Activated B cell treated with CpG ODN at 0.5 μM for 24 hours (primary cell): ENCODE measurements at regions of chr22 and their contacts with region 1.

Region 1: DNA sequence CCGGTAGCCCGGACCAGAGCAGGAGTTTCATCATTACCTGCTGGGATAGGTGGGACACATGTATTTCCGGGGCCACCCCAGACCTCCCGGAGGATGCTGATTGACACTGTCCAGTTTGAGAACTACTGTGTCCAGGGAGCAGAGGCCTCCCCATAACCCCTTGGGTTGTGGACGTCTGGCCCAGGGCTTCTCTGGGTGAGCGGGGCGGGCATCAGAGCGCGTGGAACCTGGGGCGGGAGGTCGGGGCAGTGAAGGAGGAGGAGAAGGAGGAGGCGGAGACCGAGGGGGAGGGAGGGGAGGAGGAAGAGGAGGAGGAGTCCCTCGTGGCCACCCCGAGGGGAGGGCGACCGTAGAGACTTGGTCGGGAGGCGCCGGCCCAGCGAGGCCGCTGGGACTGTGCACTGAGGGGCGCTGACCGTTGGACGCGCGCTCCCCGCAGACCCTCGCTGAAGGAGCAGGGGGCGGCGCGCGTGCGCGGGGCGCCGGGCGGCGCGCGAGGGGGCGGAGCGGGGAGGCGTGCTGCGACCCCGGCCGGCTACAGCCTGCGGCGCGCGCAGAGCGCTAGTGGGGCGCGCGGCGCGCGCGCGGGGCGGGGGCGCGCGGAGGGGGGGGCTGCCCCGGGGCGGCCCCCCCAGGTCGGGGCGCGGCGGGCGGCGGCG is at the start of gene GRK3:
- DNase-seq: peak; percentile 74
- ATAC-seq: peak; percentile 64
- H3K4me3 Mint-ChIP-seq: peak within 1 kb of the TSS; percentile 98
- H3K27ac Mint-ChIP-seq: peak within 1 kb of the TSS; percentile 99
- H3K4me1 Mint-ChIP-seq: peaks cover 81% of the 10 kb centered on the region
- H3K27me3 Mint-ChIP-seq: no peaks in the 10 kb centered on the region
- CTCF ChIP-seq: no peak
- total RNA-seq, gene GRK3: 66.6 and 66.7 TPM in 2 replicates

Region 2: DNA sequence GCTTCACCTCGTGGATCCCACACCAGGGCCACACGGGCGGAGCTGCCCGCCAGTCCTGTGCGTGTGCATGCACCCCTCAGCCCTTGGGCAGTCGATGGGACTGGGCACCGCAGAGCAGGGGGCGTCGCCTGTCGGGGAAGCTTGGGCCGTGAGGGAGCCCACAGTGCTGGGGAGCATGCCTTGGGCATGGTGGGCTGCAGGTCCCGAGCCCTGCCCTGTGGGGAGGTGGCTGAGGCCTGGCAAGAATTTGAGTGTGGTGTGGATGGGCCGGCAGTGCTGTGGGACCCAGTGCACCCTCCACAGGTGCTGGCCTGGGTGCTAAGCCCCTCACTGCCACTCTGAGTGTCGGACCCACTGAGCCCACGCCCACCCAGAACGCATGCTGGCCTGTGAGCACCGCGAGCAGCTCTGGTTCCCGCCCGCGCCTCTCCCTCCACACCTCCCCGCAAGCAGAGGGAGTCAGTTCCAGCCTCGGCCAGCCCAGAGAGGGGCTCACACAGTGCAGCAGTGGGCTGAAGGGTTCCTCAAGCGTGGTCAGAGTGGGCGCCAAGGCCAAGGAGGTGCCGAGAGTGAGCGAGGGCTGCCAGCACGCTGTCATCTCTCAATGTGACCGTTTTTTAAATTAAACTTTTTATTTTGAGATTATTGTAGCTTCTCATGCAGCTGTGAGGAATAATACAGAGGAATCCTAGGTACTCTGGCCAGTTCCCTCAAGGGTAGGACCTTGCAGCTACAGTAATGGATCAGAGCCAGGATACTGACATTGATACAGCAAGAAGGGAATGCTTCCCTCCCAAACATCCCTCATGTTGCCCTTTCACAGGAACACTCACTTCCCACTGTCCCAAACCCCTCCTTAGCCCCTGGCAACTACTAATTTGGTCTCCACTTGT is 217.3 kb before region 1 on chr22:
- CTCF ChIA-PET with region 1: no interaction called
- POLR2A ChIA-PET with region 1: no interaction called
- intact Hi-C with region 1: no loop called
- DNase-seq: no peak
- ATAC-seq: no peak
- H3K4me3 Mint-ChIP-seq: no peak overlapping the region
- H3K27ac Mint-ChIP-seq: no peak overlapping the region
- H3K4me1 Mint-ChIP-seq: no peaks in the 10 kb centered on the region
- H3K27me3 Mint-ChIP-seq: no peaks in the 10 kb centered on the region
- CTCF ChIP-seq: no peak

Region 3: DNA sequence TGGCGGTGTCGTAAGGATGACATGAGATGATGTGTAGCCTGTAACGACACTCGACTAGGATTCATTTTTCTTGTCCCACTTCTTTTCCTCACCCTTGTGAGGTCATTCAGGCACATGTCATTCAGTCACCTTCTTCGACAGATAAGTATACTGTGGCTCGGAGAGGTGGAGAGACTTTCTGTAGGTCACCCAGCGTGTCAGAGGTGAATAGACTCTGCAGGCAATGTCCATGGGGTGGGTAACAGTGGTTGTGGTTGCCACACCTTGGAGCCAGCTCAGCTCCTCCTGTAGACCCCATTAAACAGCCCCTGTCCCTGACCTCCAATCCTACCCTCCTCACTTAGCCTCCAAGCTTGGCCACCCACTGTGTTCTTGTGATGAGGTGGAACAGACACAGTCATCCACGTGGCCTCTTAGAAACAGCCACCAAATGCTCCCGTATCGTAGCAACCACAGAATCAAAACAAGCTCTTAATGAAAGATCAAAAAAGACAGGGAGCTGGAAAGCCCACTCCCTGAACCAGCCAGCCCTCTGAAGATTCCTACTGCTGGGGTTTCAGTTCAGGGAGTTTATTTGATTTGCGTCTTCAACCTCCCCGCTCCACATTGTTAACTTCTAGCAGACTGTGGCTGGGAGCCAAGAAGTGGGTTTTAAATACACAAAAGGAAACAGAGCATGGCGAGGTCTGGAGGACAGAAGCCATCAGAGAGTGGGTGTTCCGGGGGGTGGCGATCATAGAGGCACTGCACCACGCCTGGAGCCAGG is 89.0 kb before region 1 on chr22:
- CTCF ChIA-PET with region 1: no interaction called
- POLR2A ChIA-PET with region 1: no interaction called
- intact Hi-C with region 1: no loop called
- DNase-seq: no peak
- ATAC-seq: no peak
- H3K4me3 Mint-ChIP-seq: no peak overlapping the region
- H3K27ac Mint-ChIP-seq: no peak overlapping the region
- H3K4me1 Mint-ChIP-seq: no peaks in the 10 kb centered on the region
- H3K27me3 Mint-ChIP-seq: no peaks in the 10 kb centered on the region
- CTCF ChIP-seq: no peak

Region 4: GRCh38 chr22:25540166-25540907 is 24.1 kb before region 1 on chr22:
- CTCF ChIA-PET with region 1: interaction called, 68 read pairs
- POLR2A ChIA-PET with region 1: interaction called, 53 read pairs
- intact Hi-C with region 1: loop called (anchors 1 kb)
- DNase-seq: no peak
- ATAC-seq: no peak
- H3K4me3 Mint-ChIP-seq: no peak overlapping the region
- H3K27ac Mint-ChIP-seq: no peak overlapping the region
- H3K4me1 Mint-ChIP-seq: peaks cover 15% of the 10 kb centered on the region
- H3K27me3 Mint-ChIP-seq: no peaks in the 10 kb centered on the region
- CTCF ChIP-seq: no peak

Region 5: DNA sequence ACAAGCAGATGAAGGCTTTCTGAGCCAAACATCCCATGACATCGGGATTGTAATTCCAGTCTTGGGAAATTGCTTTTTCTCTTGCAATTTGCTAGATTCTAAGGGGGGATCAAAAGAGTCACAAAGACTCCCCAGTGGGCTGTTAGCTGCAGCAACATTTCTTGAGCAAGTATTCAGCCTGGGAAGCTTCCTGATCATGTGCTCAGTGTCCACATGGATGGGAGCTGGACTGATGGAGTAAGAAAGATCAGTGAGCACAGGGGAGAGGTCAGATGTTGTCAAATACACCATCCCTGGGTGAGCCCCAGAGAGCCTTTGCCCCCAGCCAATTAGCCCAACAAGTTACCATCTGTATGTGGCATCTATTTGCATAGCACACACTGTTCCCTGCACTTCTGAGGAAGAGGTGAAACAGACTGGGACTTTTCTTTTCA is 10.2 kb before region 1 on chr22:
- CTCF ChIA-PET with region 1: interaction called, 3 read pairs
- POLR2A ChIA-PET with region 1: interaction called, 33 read pairs
- intact Hi-C with region 1: no loop called
- DNase-seq: no peak
- ATAC-seq: no peak
- H3K4me3 Mint-ChIP-seq: no peak overlapping the region
- H3K27ac Mint-ChIP-seq: no peak overlapping the region
- H3K4me1 Mint-ChIP-seq: peaks cover 46% of the 10 kb centered on the region
- H3K27me3 Mint-ChIP-seq: no peaks in the 10 kb centered on the region
- CTCF ChIP-seq: no peak

Region 6: GRCh38 chr22:25644122-25644521 is 79.7 kb after region 1 on chr22:
- CTCF ChIA-PET with region 1: no interaction called
- POLR2A ChIA-PET with region 1: interaction called, 5 read pairs
- intact Hi-C with region 1: loop called (anchors 5 kb)
- DNase-seq: no peak
- ATAC-seq: no peak
- H3K4me3 Mint-ChIP-seq: peak overlapping the region; percentile 21
- H3K27ac Mint-ChIP-seq: peak overlapping the region; percentile 81
- H3K4me1 Mint-ChIP-seq: peaks cover 63% of the 10 kb centered on the region
- H3K27me3 Mint-ChIP-seq: no peaks in the 10 kb centered on the region
- CTCF ChIP-seq: no peak

Region 7: DNA sequence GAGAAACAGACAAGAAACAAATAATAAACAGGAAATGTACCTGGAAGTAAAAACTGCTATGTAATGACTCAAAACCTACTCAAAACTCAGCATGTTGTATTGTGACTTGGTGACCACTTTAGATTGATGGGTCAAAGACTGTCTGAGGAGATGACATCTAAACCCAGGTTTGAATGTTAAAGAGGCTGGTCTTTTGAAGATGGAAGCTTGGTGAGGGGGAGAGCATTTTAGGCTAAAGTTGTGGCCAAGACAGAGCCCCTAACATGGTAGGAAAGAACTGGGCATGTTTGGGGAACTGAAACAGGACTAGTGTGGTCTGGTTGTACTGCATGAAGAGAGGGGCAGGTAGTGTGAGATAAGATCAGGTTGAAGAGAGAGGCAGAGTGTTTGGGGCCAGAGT is 92.3 kb after region 1 on chr22:
- CTCF ChIA-PET with region 1: interaction called, 3 read pairs
- POLR2A ChIA-PET with region 1: interaction called, 33 read pairs
- intact Hi-C with region 1: loop called (anchors 1 kb)
- DNase-seq: peak; percentile 23
- ATAC-seq: peak; percentile 99
- H3K4me3 Mint-ChIP-seq: peak overlapping the region; percentile 42
- H3K27ac Mint-ChIP-seq: peak overlapping the region; percentile 72
- H3K4me1 Mint-ChIP-seq: peaks cover 81% of the 10 kb centered on the region
- H3K27me3 Mint-ChIP-seq: no peaks in the 10 kb centered on the region
- CTCF ChIP-seq: no peak

Region 8: GRCh38 chr22:25777870-25778269 is 213.4 kb after region 1 on chr22:
- CTCF ChIA-PET with region 1: interaction called, 5 read pairs
- POLR2A ChIA-PET with region 1: no interaction called
- intact Hi-C with region 1: loop called (anchors 1 kb)
- DNase-seq: no peak
- ATAC-seq: no peak
- H3K4me3 Mint-ChIP-seq: no peak overlapping the region
- H3K27ac Mint-ChIP-seq: no peak overlapping the region
- H3K4me1 Mint-ChIP-seq: peaks cover 3% of the 10 kb centered on the region
- H3K27me3 Mint-ChIP-seq: peaks cover 6% of the 10 kb centered on the region
- CTCF ChIP-seq: no peak

Region 9: GRCh38 chr22:26672590-26673468 is 1108.4 kb after region 1 on chr22:
- CTCF ChIA-PET with region 1: no interaction called
- POLR2A ChIA-PET with region 1: no interaction called
- intact Hi-C with region 1: loop called (anchors 5 kb)
- DNase-seq: peak; percentile 82
- ATAC-seq: peak; percentile 67
- H3K4me3 Mint-ChIP-seq: peak overlapping the region; percentile 98
- H3K27ac Mint-ChIP-seq: peak overlapping the region; percentile 99
- H3K4me1 Mint-ChIP-seq: peaks cover 92% of the 10 kb centered on the region
- H3K27me3 Mint-ChIP-seq: no peaks in the 10 kb centered on the region
- CTCF ChIP-seq: no peak